Right ventricle myocardium superior (tissue), 1 donor: ENCODE measurements at regions of chr7 and their contacts with region 1.

Region 1: GRCh38 chr7:78924581-78924980 is 528.9 kb downstream of the MAGI2 start:
- DNase-seq: no peak
- ATAC-seq: no peak

Region 2: DNA sequence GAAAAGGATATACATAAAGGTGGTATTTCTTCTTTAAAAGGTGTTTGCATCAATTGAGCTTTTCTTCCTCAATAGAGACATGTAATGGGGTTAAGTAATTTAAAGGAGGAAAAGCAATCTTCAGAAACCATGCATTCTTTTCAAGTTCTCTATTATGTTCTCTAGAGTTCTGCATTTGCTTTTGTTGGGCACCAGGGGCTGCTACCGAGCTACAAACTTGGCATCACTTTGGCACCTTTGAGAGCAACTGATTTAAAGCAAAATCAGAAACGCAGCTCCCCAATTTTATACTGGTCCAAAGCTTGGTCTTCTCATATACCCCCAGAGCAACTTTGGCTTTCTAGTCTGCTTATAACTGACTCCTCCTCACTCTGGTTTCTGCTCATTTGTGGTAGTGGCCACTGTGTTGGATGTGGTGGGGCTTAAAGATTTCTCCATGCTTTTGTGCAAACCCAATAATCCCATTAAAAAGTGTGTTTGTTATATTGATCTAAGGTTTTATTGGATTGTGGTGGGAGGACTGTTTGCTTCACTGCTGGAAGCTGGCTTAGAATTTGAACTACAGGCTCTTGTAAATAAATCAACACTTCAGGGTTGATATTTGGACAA is 413.9 kb before region 1 on chr7:
- intact Hi-C with region 1: loop called (anchors 10 kb)
- DNase-seq: no peak
- ATAC-seq: no peak